Naive thymus-derived CD4-positive, alpha-beta T cell (primary cell): ENCODE measurements at regions of chr19 and their contacts with region 1.

Region 1: DNA sequence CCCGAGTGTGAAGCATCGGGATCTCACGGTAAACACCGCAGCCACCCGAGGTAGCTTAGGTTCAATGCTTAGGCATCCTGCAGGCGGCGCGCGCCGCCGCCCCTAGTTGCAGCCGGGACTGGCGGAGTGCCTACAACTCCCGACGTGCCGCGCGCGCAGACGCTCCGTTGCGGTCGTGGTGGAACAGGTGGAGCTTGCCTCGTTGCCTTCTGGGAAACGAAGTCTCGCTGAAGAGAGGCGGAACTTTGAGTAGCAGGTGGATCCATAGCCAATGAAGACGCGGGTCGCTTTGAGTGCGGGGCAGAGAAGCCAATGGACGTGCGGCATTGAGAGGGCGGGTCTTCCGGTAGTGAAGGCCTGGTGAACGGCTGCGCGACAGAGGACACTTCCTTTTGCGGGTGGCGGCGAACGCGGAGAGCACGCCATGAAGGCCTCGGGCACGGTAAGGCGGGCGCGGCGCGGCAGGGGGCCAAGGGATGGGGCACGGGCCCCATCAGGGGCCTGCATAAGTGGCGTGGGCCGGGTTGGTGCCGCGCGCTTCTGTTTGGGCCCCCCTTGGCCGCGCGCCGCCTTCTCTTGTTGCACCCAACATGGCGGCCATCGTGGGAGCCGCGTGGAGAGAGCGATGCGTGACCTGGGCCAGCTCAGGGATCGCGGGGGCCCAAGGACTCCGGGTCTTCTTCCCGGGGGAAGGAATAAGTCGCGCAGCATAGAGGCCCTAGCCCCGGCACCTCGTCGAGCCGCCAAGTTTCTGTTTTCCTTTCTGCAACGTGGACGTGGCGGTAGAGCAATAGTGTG is at the start of gene RPL18A:
- DNase-seq: peak; percentile 83 to 100 (median 98)
- ATAC-seq: peak; percentile 97
- H3K4me3 ChIP-seq: peak within 1 kb of the TSS; percentile 96
- H3K4me3 Mint-ChIP-seq: peak within 1 kb of the TSS; percentile 95 to 100 (median 98)
- H3K27ac ChIP-seq: peak within 1 kb of the TSS; percentile 84
- H3K27ac Mint-ChIP-seq: peak within 1 kb of the TSS; percentile 93 to 99 (median 98)
- H3K4me1 ChIP-seq: peaks cover 18 to 19% of the 10 kb centered on the region in 2 donors
- H3K4me1 Mint-ChIP-seq: peaks cover 17 to 48% (median 33%) of the 10 kb centered on the region in 7 donors
- H3K27me3 ChIP-seq: no peaks in the 10 kb centered on the region
- H3K27me3 Mint-ChIP-seq: peaks cover 0 to 5% (median 0%) of the 10 kb centered on the region in 5 donors
- total RNA-seq, gene RPL18A: 2,413 to 3,932 (median 3,224) TPM

Region 2: GRCh38 chr19:17390665-17391370 is 468.9 kb before region 1 on chr19:
- CTCF ChIA-PET with region 1: no interaction called
- POLR2A ChIA-PET with region 1: no interaction called
- intact Hi-C with region 1: loop called in 1 of 2 experiments (anchors 2 kb)
- DNase-seq: peak; percentile 77 to 93 (median 85)
- ATAC-seq: peak; percentile 100
- H3K4me3 ChIP-seq: peak overlapping the region; percentile 84
- H3K4me3 Mint-ChIP-seq: peak overlapping the region; percentile 85 to 98 (median 92)
- H3K27ac ChIP-seq: peak overlapping the region; percentile 2
- H3K27ac Mint-ChIP-seq: peak overlapping the region in 5 of 9 donors; percentile 28 to 92 (median 61)
- H3K4me1 ChIP-seq: peaks cover 15 to 18% of the 10 kb centered on the region in 2 donors
- H3K4me1 Mint-ChIP-seq: peaks cover 6 to 30% (median 20%) of the 10 kb centered on the region in 7 donors
- H3K27me3 ChIP-seq: no peaks in the 10 kb centered on the region
- H3K27me3 Mint-ChIP-seq: peaks cover 0 to 28% (median 0%) of the 10 kb centered on the region in 5 donors

Region 3: GRCh38 chr19:17496337-17496997 is 363.3 kb before region 1 on chr19:
- CTCF ChIA-PET with region 1: interaction called, 5 read pairs
- POLR2A ChIA-PET with region 1: no interaction called
- intact Hi-C with region 1: loop called in 1 of 2 experiments (anchors 1 kb)
- DNase-seq: peak; percentile 61 to 82 (median 71)
- ATAC-seq: peak; percentile 100
- H3K4me3 ChIP-seq: peak overlapping the region; percentile 16
- H3K4me3 Mint-ChIP-seq: peak overlapping the region in 4 of 10 donors; percentile 11 to 46 (median 23)
- H3K27ac ChIP-seq: no peak overlapping the region
- H3K27ac Mint-ChIP-seq: peak overlapping the region in 4 of 9 donors; percentile 26 to 72 (median 50)
- H3K4me1 ChIP-seq: peaks cover 8 to 15% of the 10 kb centered on the region in 2 donors
- H3K4me1 Mint-ChIP-seq: peaks cover 13 to 30% (median 27%) of the 10 kb centered on the region in 7 donors
- H3K27me3 ChIP-seq: no peaks in the 10 kb centered on the region
- H3K27me3 Mint-ChIP-seq: no peaks in the 10 kb centered on the region

Region 4: DNA sequence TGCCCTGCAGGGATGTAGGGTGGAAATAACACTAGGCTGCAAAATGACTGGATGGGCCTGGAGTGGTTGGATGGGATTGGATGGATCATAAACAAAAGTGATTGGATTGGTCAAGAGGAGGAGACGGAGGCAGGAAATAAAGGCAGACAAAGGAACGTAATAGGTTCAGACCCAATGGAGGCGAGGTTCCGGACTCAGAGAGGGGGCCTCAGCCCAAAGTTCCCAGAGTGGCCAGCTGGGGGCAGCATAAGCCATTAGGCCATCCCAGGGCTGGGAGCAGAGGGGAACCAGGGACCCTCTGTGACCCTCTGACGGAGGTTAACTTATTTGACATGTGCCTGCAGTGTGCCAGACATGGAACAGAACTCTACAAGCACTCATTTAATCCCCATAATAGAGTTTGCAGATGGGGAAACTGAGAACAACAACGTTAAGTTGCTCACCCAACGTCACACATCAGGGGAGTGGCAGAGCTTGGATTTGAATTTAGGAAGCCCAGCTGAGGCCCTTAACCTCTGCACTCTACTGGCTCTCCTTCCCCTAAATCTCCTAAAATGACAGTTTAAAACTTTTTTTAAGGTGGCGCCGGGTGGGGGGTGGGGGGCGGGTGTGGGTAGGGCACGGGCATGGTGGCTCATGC is 155.8 kb before region 1 on chr19:
- CTCF ChIA-PET with region 1: interaction called, 48 read pairs
- POLR2A ChIA-PET with region 1: interaction called, 5 read pairs
- intact Hi-C with region 1: loop called (anchors 1 kb)
- DNase-seq: peak; percentile 51 to 77 (median 65)
- ATAC-seq: peak; percentile 97
- H3K4me3 ChIP-seq: no peak overlapping the region
- H3K4me3 Mint-ChIP-seq: no peak overlapping the region
- H3K27ac ChIP-seq: no peak overlapping the region
- H3K27ac Mint-ChIP-seq: peak overlapping the region in 1 of 9 donors; percentile 42
- H3K4me1 ChIP-seq: no peaks in the 10 kb centered on the region
- H3K4me1 Mint-ChIP-seq: peaks cover 0 to 5% (median 0%) of the 10 kb centered on the region in 7 donors
- H3K27me3 ChIP-seq: no peaks in the 10 kb centered on the region
- H3K27me3 Mint-ChIP-seq: peaks cover 0 to 10% (median 7%) of the 10 kb centered on the region in 5 donors

Region 5: DNA sequence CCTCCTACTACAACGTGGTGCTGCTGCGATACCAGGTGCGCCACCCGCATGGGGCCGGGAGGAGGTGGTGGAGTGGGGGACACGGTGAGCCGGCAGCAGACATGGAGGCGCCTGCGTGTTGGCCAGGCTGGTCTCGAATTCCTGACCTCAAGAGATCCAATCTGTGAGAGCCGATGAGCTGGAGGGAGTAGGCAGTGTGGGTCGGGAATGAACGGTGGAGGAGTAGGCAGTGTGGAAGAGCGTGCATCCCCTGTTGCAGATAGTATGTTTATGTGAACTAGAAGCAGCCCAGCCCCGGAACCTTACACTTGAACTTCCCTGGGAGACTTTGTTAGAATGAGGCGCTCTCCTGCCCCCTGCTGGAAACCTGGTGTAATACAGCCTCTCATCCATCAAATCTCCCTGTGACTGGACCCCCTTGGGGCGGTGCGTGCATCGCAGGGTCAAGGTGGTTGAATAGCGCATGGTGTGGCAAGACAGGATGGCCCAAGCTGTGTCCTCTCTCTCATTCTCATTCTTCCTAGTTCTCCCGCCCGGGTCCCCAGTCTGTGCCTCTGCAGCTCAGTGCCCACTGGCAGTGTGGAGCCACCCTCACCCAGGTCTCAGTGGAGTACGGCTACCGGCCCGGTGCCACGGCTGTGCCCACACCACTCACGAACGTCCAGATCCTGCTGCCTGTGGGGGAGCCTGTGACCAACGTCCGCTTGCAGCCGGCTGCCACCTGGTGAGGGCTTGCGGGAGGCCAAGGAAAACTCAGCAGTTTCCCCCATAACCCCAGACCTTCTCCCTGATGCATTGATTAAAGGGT is 75.3 kb before region 1 on chr19:
- CTCF ChIA-PET with region 1: interaction called, 33 read pairs
- POLR2A ChIA-PET with region 1: interaction called, 6 read pairs
- intact Hi-C with region 1: loop called (anchors 1 kb)
- DNase-seq: peak; percentile 56 to 81 (median 73)
- ATAC-seq: peak; percentile 90
- H3K4me3 ChIP-seq: no peak overlapping the region
- H3K4me3 Mint-ChIP-seq: no peak overlapping the region
- H3K27ac ChIP-seq: no peak overlapping the region
- H3K27ac Mint-ChIP-seq: peak overlapping the region in 8 of 9 donors; percentile 13 to 94 (median 56)
- H3K4me1 ChIP-seq: peaks cover 0 to 6% of the 10 kb centered on the region in 2 donors
- H3K4me1 Mint-ChIP-seq: peaks cover 10 to 22% (median 18%) of the 10 kb centered on the region in 7 donors
- H3K27me3 ChIP-seq: no peaks in the 10 kb centered on the region
- H3K27me3 Mint-ChIP-seq: no peaks in the 10 kb centered on the region

Region 6: GRCh38 chr19:18000935-18001778 is 141.4 kb after region 1 on chr19:
- CTCF ChIA-PET with region 1: interaction called, 11 read pairs
- POLR2A ChIA-PET with region 1: interaction called, 12 read pairs
- intact Hi-C with region 1: loop called (anchors 1 kb)
- DNase-seq: peak; percentile 89 to 96 (median 95)
- ATAC-seq: peak; percentile 90
- H3K4me3 ChIP-seq: peak overlapping the region; percentile 78
- H3K4me3 Mint-ChIP-seq: peak overlapping the region; percentile 85 to 98 (median 93)
- H3K27ac ChIP-seq: peak overlapping the region; percentile 97
- H3K27ac Mint-ChIP-seq: peak overlapping the region; percentile 94 to 100 (median 99)
- H3K4me1 ChIP-seq: peaks cover 19 to 24% of the 10 kb centered on the region in 2 donors
- H3K4me1 Mint-ChIP-seq: peaks cover 10 to 35% (median 18%) of the 10 kb centered on the region in 7 donors
- H3K27me3 ChIP-seq: no peaks in the 10 kb centered on the region
- H3K27me3 Mint-ChIP-seq: peaks cover 0 to 2% (median 0%) of the 10 kb centered on the region in 5 donors